ENCODE measurements at regions of chr1 and their contacts with region 1.

Region 1: GRCh38 chr1:181088079-181089016 is at the start of gene IER5:
- DNase-seq: peak; percentile 97

Region 2: GRCh38 chr1:181099152-181100014 is 11.0 kb after region 1 on chr1:
- CTCF ChIA-PET with region 1: interaction called, 4 read pairs
- POLR2A ChIA-PET with region 1: interaction called, 33 read pairs
- DNase-seq: peak; percentile 42

Region 3: DNA sequence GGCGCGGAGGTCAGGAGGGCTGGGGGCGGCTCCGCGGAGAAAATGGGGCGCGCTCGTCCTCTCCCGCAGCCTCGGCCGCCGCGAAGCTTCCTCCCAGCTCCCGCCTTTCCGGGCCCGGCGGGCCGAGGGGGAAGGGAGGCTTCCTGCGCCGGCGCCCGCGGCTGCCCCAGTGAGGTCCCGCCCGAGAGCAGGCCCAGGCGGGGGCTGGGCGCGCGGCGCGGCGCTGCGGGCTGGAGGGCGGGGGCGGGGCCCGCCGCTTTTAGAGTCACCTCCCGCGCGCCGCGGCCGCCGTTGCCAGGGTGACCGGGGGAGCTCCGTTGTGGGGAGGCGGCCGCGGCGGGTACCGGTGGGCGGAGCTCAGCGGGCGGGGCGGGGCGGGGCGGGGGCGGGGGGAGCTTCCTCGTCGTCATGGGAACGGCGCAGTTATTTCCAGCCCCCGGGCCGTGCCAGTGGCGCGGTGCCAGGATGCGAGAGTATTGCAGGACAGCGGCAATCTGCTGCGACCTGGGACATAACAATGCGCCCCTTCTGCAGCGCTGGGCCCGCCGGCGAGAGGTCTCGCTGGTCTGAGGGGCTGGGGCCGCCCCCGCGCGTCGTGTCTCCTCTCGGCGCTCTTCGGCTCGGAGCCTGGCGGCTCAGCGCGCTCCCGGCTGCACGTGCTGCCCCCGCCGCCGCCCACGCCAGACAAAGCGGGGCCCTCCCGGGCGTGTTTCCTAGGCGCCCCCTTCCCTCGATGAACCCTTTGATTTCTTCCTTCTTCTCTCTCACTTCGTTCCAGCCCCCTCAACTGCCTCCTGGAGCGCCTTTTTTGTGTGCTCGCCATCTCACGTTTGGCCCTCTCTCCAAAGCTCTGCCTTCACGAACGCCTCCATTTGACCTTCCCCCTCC is 17.0 kb after region 1 on chr1:
- CTCF ChIA-PET with region 1: interaction called, 4 read pairs
- POLR2A ChIA-PET with region 1: interaction called, 33 read pairs
- DNase-seq: peak; percentile 94

Region 4: GRCh38 chr1:181128592-181129497 is 40.5 kb after region 1 on chr1:
- CTCF ChIA-PET with region 1: interaction called, 5 read pairs
- POLR2A ChIA-PET with region 1: interaction called, 10 read pairs
- DNase-seq: no peak

Region 5: GRCh38 chr1:181134543-181135362 is 46.4 kb after region 1 on chr1:
- CTCF ChIA-PET with region 1: interaction called, 5 read pairs
- POLR2A ChIA-PET with region 1: interaction called, 15 read pairs
- DNase-seq: no peak

Region 6: GRCh38 chr1:181142096-181142958 is 54.0 kb after region 1 on chr1:
- CTCF ChIA-PET with region 1: interaction called, 22 read pairs
- POLR2A ChIA-PET with region 1: interaction called, 15 read pairs
- DNase-seq: peak; percentile 97

Region 7: DNA sequence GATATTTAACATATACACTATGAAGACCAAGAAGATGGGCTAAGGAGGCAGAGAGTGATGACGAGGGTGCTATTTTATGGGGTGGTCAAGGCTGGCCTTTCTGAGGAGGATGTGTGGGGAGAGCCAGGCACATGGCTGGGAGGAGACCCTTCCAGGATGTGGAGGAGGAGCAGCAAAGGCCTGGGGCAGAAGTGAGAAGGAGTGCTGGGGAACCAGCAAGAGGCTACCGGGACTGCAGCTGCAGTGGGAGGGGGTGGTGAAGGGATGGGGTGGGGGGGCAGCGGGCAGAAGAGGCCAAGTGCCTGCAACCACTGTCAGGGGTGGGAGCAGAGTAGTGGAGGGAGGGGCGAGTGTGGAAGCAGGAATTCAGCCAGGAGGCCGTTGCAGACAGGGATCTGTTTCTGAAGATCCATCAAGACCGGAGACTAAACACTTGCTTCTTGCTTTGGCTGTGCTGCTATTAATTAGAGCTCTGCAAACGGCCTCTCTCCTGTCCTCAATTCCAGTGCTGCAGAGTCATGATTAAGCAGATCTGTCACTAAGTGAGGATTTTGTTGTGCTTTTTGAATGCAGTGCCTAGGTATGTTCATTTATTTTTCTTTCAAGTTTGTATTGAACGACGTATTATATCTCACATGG is 90.0 kb after region 1 on chr1:
- CTCF ChIA-PET with region 1: no interaction called
- POLR2A ChIA-PET with region 1: no interaction called
- DNase-seq: no peak

Region 8: GRCh38 chr1:181189691-181190363 is 101.5 kb after region 1 on chr1:
- CTCF ChIA-PET with region 1: no interaction called
- POLR2A ChIA-PET with region 1: no interaction called
- DNase-seq: peak; percentile 96

Measured in HEK293T (cell line).